ENCODE measurements at regions of chr9 and their contacts with region 1.

Region 1: DNA sequence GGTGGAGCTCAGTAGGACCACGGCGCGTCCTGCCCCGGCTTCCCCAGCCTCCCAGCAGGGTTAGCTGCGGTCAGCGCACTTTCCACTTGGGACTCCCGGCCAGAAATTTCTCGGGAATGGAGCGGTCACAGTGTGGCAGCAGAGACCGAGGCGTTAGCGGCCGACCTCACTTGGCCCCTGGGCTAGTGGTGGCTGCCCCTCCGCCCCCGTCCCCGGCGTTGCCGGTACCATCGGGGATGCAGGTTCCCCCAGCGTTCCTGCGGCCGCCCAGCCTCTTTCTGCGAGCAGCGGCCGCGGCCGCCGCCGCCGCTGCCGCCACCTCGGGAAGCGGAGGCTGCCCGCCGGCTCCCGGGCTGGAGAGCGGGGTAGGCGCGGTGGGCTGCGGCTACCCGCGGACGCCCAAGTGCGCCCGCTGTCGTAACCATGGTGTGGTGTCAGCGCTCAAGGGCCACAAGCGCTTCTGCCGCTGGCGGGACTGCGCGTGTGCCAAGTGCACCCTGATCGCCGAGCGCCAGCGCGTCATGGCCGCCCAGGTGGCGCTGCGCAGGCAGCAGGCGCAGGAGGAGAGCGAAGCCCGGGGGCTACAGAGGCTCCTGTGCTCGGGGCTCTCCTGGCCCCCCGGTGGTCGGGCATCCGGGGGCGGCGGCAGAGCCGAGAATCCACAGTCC is 460 bp downstream of the DMRTA1 start:
- DNase-seq: peak; percentile 72
- H3K4me3 ChIP-seq: peak overlapping the region; percentile 49 to 86 (median 86)
- H3K27ac ChIP-seq: peak overlapping the region; percentile 66
- H3K4me1 ChIP-seq: peaks cover 19% of the 10 kb centered on the region
- H3K27me3 ChIP-seq: peaks cover 5 to 22% of the 10 kb centered on the region in 2 experiments
- CTCF ChIP-seq: peak; percentile 27 to 42
- POLR2A ChIP-seq: no peak

Region 2: DNA sequence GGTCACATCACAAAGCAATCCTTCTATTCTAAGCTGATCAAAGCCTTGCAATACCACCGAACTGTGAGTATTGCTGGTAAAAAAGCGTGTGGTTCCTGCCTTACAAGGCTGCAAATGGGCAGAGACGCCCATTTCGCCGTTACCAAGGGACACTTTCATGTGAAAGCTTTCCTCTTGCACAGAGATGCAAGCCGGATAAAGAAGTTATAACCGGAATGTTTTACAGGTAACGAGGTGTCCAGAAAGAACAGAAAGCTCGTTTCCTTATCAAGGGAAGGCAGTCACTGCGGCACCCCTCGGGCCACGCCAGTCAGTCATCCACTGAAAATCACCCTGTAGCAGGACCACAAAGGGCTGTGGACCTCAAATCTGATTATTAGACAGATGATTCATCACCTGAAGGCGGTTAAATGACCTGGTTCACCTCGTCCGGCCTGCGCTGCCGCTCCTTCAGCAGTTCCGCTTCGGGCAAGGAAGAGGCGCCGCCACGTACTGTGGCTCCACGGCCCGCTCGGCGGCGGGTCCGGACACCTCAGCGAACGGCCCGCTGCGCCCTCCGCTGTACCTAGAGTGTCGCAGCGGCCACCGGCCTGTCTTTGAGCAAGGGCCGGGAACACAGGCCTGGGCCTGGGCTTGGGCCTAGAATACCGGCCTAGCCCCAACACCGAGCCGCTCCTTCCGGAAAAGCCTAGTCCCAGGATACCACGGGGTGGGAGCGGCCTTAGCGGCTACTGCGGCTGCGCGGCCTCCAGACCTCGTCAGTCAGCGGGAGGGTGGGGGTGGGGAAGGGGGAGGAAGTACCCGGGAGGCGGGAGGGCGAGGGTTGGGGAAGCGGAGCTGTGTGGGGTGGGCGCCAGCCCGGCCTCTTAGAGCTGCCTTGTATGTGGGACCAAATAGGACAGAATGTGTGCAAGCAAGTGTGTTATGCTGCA is 1112.1 kb before region 1 on chr9 and contains the start of gene KLHL9:
- CTCF ChIA-PET with region 1: no interaction called
- POLR2A ChIA-PET with region 1: no interaction called
- dilution Hi-C with region 1: no loop called
- intact Hi-C with region 1: loop called (anchors 10 kb)
- DNase-seq: peak; percentile 91
- H3K4me3 ChIP-seq: peak within 1 kb of the TSS; percentile 60 to 96 (median 95)
- H3K27ac ChIP-seq: peak within 1 kb of the TSS; percentile 94
- H3K4me1 ChIP-seq: peaks cover 35% of the 10 kb centered on the region
- H3K27me3 ChIP-seq: peaks cover 8 to 12% of the 10 kb centered on the region in 2 experiments
- CTCF ChIP-seq: no peak
- POLR2A ChIP-seq: peak; percentile 74
- total RNA-seq, gene KLHL9: 23.5 and 23.6 TPM in 2 replicates

Region 3: DNA sequence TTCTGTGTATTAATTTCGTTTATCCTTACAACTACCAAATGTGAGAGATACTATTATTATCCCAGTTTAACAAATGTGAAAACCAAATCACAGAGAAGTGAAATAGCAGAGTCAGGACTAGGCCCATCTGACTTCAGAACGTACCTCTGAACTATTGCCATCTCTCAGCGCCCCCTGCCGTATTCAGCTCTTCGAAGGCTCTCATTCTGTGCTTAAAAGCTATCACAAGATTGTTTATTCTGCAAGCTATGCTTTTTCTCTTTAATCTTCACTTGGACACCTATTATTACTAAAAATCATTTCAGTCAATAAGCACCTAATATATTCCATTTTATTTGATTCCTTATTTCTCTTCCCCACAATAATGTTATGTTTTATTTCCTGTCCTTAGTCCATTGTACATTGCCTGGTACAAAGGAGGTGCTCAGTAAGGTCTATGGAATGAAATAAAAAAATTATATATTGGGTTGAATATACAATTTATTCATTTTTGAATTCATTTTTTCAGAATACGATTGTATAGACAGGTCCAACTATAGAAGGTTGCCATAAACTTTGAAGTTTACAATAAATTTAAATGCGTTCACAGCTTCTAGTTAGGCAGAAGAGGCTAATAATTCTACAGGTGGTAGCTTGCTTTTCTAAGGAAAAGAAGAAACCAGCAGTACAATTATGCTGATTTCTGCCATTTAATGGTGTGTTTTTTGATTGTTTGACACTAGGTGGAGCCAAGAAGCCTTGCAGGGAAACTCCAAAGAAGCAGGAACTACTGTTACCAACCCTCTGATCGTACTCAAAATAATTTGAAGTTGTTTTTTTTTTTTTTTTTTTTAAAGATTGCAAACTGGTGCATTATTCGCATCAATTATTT is 202.7 kb before region 1 on chr9:
- CTCF ChIA-PET with region 1: interaction called, 72 read pairs
- POLR2A ChIA-PET with region 1: no interaction called
- dilution Hi-C with region 1: no loop called
- intact Hi-C with region 1: loop called (anchors 1 kb)
- DNase-seq: peak; percentile 47
- H3K4me3 ChIP-seq: no peak overlapping the region
- H3K27ac ChIP-seq: no peak overlapping the region
- H3K4me1 ChIP-seq: peaks cover 6% of the 10 kb centered on the region
- H3K27me3 ChIP-seq: peaks cover 4 to 7% of the 10 kb centered on the region in 2 experiments
- CTCF ChIP-seq: peak; percentile 28 to 58
- POLR2A ChIP-seq: no peak

Region 4: DNA sequence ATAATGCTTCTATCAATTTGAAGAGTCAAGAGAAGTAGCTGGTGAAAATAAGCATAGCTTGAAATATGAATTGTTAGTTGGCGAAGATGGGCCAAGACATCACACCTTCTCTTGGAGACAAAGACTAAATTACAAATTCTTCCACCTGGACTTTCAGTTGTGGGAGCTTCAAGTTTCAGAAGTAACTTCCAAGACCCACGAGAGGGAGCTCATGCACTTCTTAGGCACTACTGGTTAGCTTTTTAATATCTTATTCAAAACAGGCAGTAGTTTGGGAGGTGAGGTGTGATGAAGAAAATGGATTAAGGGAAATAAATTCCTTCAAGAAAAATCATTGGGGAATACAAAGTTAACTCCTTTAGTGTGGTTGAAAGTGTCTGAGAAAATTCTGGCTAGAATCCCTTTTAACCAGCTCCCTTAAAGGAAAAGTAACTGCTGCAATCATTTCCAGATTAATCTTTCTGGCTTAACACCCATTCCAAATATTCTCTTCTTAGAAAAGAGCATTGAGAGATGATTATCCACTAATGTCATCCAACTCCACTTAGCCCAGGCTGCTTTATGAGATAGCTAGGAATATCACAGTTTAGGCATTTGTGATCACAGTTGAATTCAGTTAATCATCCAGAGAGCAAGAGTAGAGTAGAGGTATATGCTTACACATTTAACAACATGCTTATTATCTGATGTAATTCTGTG is 139.9 kb before region 1 on chr9:
- CTCF ChIA-PET with region 1: interaction called, 617 read pairs
- POLR2A ChIA-PET with region 1: no interaction called
- dilution Hi-C with region 1: no loop called
- intact Hi-C with region 1: loop called (anchors 1 kb)
- DNase-seq: peak; percentile 54
- H3K4me3 ChIP-seq: no peak overlapping the region
- H3K27ac ChIP-seq: no peak overlapping the region
- H3K4me1 ChIP-seq: no peaks in the 10 kb centered on the region
- H3K27me3 ChIP-seq: peaks cover 0 to 5% of the 10 kb centered on the region in 2 experiments
- CTCF ChIP-seq: peak; percentile 48 to 59
- POLR2A ChIP-seq: no peak

Region 5: GRCh38 chr9:22363421-22363887 is 83.6 kb before region 1 on chr9:
- CTCF ChIA-PET with region 1: no interaction called
- POLR2A ChIA-PET with region 1: no interaction called
- dilution Hi-C with region 1: no loop called
- intact Hi-C with region 1: no loop called
- DNase-seq: no peak
- H3K4me3 ChIP-seq: no peak overlapping the region
- H3K27ac ChIP-seq: no peak overlapping the region
- H3K4me1 ChIP-seq: no peaks in the 10 kb centered on the region
- H3K27me3 ChIP-seq: no peaks in the 10 kb centered on the region
- CTCF ChIP-seq: no peak
- POLR2A ChIP-seq: no peak

Region 6: GRCh38 chr9:22416692-22417060 is 30.4 kb before region 1 on chr9:
- CTCF ChIA-PET with region 1: interaction called, 26 read pairs
- POLR2A ChIA-PET with region 1: no interaction called
- dilution Hi-C with region 1: no loop called
- intact Hi-C with region 1: loop called (anchors 1 kb)
- DNase-seq: peak; percentile 75
- H3K4me3 ChIP-seq: peak overlapping the region in 1 of 3 experiments; percentile 33
- H3K27ac ChIP-seq: peak overlapping the region; percentile 80
- H3K4me1 ChIP-seq: peaks cover 29% of the 10 kb centered on the region
- H3K27me3 ChIP-seq: no peaks in the 10 kb centered on the region
- CTCF ChIP-seq: no peak
- POLR2A ChIP-seq: no peak